PC-3 (cell line): ENCODE measurements at regions of chr1 and their contacts with region 1.

Region 1: GRCh38 chr1:146032631-146033219 is 11.2 kb upstream of the HJV start:
- DNase-seq: peak; percentile 81
- ATAC-seq: peak; percentile 14
- H3K4me3 ChIP-seq: no peak overlapping the region
- H3K27ac ChIP-seq: no peak overlapping the region
- H3K4me1 ChIP-seq: peaks cover 11% of the 10 kb centered on the region; the same call in 1 of the 2 replicates
- H3K27me3 ChIP-seq: no peaks in the 10 kb centered on the region
- CTCF ChIP-seq: peak; percentile 79

Region 2: GRCh38 chr1:145949219-145949618 is 83.5 kb before region 1 on chr1:
- CTCF ChIA-PET with region 1: no interaction called
- POLR2A ChIA-PET with region 1: no interaction called
- intact Hi-C with region 1: no loop called
- DNase-seq: no peak
- ATAC-seq: no peak
- H3K4me3 ChIP-seq: no peak overlapping the region
- H3K27ac ChIP-seq: no peak overlapping the region
- H3K4me1 ChIP-seq: no peaks in the 10 kb centered on the region
- H3K27me3 ChIP-seq: no peaks in the 10 kb centered on the region
- CTCF ChIP-seq: no peak

Region 3: DNA sequence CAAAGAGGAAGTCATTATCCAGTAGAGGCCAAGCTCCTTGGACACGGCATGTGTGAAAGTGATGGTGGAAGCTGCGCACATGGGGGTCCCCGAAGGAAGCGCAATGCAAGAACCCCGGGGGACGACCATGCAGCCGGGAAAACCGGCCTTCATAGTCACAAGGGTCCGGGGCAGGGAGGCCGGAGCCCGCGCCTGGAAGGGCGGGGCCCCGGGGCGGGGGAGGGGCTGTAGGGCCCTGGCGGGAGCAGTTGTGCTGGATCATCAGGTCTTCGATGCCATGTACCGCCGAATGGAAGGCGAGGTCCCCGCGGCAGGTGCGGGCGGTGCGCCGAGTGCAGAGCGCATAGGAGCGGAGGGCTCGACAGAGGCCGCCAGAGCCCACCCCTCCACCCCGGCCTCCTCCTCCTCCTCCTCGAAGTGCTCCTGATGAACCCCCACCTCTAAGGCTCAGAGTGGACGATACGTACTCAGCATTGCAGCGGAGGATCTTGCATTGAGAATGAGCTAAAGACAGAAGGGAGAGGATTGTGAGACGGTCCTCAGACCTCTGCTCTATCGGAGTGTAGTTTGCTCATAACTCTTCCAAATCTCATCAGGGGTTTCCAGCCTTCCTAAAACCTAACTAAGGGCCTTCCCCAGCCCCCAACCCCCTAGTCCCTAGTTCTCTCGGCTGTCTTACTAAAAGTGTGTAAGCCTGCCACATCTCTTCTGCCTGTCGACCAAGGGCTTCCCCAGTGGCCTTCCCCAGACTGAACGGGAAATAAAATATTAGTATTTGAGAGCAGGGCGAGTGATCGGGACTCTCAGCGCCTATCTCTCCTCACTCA is 13.3 kb before region 1 on chr1:
- CTCF ChIA-PET with region 1: interaction called, 11 read pairs
- POLR2A ChIA-PET with region 1: no interaction called
- intact Hi-C with region 1: no loop called
- DNase-seq: no peak
- ATAC-seq: no peak
- H3K4me3 ChIP-seq: no peak overlapping the region
- H3K27ac ChIP-seq: no peak overlapping the region
- H3K4me1 ChIP-seq: no peaks in the 10 kb centered on the region
- H3K27me3 ChIP-seq: 0 out of 2 replicates have a peak, but pooled peaks cover 6% of the 10 kb centered on the region
- CTCF ChIP-seq: no peak